ENCODE measurements at regions of chr7 and their contacts with region 1.

Region 1: DNA sequence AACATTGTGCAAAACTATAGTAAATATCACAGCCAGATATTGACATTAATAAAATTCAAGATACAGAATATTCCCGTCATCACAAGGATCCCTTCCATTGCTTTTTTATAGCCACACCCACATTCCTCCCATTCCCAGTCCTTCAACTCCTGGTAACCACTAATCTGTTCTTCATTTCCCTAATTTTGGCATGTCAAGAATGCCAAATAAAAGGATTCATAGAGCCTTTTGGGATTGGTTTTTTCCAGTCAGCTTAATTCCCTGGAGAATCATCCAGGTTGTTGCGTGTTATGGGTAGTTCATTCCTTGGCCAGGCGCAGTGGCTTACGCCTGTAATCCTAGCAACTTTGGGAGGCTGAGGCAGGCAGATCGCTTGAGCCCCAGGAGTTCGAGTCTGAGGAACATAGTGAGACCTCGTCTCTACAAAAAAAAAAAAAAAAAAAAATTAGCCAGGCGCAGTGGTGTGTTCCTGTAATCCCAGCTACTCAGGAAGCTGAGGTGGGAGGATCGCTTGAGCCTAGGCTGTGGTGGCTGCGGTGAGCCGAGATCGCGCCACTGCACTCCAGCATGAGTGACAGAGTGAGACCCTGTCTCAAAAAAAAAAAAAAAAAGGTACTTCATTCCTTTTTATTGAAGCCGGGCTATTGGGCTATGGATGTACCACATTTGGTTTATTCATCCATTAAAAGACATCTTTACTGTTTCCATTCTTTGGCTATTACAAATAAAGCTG is 2.7 kb downstream of the OGDH start:
- DNase-seq: no peak
- H3K4me3 ChIP-seq: no peak overlapping the region
- CTCF ChIP-seq: no peak
- POLR2A ChIP-seq: no peak

Region 2: DNA sequence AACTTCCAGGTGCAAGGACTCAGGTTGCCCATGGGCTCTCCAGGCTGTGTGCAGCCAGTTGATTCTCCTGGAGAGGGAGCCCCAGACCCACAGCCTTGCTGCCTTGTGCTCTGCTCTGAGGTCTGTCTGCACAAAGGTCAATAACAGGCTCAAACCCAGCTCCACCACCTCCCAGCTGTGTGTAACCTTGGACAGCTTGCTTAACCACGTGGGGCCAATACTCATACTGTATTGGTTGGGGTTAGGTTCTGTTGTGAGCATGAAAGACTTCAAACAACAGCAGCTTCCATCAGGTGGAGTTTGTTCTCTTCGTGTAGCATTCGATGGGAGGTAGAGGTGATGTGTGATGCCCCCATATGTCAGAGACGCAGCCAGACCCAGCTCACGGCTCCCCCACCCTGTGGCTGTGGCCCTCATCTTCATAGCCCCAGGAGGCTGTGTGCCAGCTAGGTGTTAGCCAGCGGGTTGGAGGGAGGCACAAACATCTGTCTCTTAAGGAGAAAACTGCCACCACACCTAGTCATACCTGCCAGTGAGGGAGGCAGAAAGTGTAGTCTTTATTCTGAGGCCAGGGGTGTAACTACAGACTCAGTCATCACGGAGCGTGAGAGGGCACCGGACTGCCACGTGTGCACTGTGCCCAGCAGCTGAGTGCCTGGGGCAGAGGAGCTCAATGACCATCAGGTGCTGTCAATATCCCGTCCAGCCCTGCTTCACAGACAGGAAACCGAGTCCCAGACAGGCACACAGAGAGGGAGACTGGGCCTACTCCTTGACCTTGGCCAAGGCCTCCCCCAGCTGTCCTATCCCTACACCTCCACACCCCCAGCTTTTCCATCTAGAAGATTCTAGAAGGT is 477.7 kb before region 1 on chr7:
- intact Hi-C with region 1: no loop called
- DNase-seq: no peak
- H3K4me3 ChIP-seq: no peak overlapping the region
- CTCF ChIP-seq: no peak
- POLR2A ChIP-seq: no peak

Region 3: GRCh38 chr7:44631458-44632115 is 22.5 kb after region 1 on chr7:
- intact Hi-C with region 1: loop called (anchors 1 kb)
- DNase-seq: no peak
- H3K4me3 ChIP-seq: no peak overlapping the region
- CTCF ChIP-seq: no peak
- POLR2A ChIP-seq: no peak

Measured in lower leg skin (tissue), 4 donors.